ENCODE measurements at regions of chr1 and their contacts with region 1.

Region 1: DNA sequence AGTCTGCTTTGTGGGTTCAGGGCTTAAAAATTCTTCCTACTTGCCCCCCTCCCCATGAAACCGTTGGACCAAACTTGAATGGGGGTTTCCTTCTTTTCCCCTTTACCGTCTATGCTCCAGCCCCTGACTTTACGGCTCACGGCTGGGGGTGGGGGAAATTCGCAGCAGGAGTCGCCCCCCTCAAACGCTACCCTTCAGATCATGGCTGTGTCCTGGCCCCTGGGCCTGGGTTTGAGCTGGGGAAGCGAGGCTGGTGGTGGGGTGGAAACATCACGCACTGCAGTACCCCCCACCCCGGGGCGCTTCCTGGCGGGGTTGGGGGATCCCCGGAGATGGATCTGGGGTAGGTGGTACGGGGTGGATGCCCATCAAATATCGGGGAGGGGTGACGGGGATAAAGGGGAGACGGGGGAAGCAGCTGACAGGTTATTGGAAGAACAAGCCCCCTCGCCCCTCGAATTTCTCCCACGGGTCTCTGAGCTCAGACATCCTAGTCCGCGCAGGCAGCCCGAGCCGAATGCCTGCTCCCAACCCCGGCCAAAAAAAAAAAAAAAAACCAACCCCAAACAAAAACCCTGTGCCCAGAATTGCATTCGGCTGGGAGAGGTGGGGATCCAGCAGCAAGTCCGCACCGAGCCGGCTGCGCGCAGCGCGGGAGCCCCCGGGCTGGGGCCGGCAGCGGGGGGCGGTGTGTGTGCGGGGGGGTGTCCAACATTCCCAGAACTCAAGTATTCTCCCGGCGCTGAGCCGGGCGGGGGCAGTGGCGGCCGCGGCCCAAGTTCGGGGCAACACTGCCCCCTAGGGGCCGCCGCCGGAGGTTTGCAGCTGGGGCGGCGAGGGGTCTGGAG is 59.0 kb upstream of the ACOT11 start:
- DNase-seq: peak; percentile 65 to 84 (median 72)
- H3K4me3 ChIP-seq: peak overlapping the region; percentile 71 to 94
- H3K4me3 Mint-ChIP-seq: peak overlapping the region; percentile 88 to 96 (median 90)
- H3K27ac ChIP-seq: peak overlapping the region; percentile 72
- H3K27ac Mint-ChIP-seq: peak overlapping the region; percentile 82 to 95 (median 88)
- H3K4me1 ChIP-seq: peaks cover 39% of the 10 kb centered on the region
- H3K4me1 Mint-ChIP-seq: peaks cover 32 to 51% (median 43%) of the 10 kb centered on the region in 4 donors
- H3K27me3 ChIP-seq: no peaks in the 10 kb centered on the region
- H3K27me3 Mint-ChIP-seq: peaks cover 0 to 4% of the 10 kb centered on the region in 2 donors

Region 2: DNA sequence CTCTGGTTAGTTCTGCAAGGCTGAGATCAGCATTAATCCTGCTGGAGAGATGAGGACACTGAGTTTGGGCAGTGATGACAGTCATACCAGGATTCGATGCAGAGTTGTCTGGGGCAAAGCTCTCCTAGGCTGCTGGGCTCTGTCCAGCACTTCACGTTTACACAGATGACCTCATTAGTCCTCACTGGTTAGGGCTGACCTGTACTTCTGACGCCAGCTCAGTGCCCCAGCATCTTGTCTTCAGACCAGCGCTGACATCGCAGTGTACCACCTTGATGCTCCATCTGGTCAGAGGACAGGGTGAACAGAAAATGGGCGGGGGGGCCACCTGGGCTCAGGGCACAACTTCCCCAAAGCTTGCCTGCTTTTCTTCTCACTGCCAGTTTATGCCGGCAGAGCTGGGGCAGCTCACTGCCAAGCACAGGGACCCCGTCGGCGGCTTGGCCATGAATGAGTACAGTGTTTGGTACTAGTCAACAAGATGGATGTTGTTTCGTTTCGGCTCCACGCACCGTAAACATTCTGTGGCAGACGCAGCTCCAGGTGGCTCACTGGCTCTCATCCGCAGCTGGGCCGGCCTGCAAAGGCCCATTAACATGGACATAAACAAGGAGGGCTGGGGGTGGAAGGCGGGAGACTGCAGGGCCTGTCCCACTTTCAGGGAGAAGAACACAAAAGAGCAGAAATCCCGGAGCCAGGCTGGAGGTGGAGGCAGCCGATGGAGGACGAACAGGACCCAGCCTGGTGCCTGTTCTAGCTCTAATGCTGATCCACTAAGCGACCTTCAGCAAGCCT is 868.7 kb before region 1 on chr1:
- CTCF ChIA-PET with region 1: no interaction called
- POLR2A ChIA-PET with region 1: no interaction called
- intact Hi-C with region 1: no loop called
- DNase-seq: no peak
- H3K4me3 ChIP-seq: no peak overlapping the region
- H3K4me3 Mint-ChIP-seq: no peak overlapping the region
- H3K27ac ChIP-seq: no peak overlapping the region
- H3K27ac Mint-ChIP-seq: no peak overlapping the region
- H3K4me1 ChIP-seq: no peaks in the 10 kb centered on the region
- H3K4me1 Mint-ChIP-seq: no peaks in the 10 kb centered on the region
- H3K27me3 ChIP-seq: no peaks in the 10 kb centered on the region
- H3K27me3 Mint-ChIP-seq: peaks cover 0 to 1% of the 10 kb centered on the region in 2 donors

Region 3: GRCh38 chr1:53945433-53946251 is 543.4 kb before region 1 on chr1 and contains the start of gene IFT25:
- CTCF ChIA-PET with region 1: no interaction called
- POLR2A ChIA-PET with region 1: interaction called, 7 read pairs
- intact Hi-C with region 1: loop called (anchors 10 kb)
- DNase-seq: peak; percentile 97 to 100 (median 97)
- H3K4me3 ChIP-seq: peak within 1 kb of the TSS; percentile 63 to 87
- H3K4me3 Mint-ChIP-seq: peak within 1 kb of the TSS; percentile 93 to 99 (median 96)
- H3K27ac ChIP-seq: peak within 1 kb of the TSS; percentile 82
- H3K27ac Mint-ChIP-seq: peak within 1 kb of the TSS; percentile 85 to 98 (median 95)
- H3K4me1 ChIP-seq: peaks cover 44% of the 10 kb centered on the region
- H3K4me1 Mint-ChIP-seq: peaks cover 27 to 63% (median 46%) of the 10 kb centered on the region in 4 donors
- H3K27me3 ChIP-seq: no peaks in the 10 kb centered on the region
- H3K27me3 Mint-ChIP-seq: no peaks in the 10 kb centered on the region
- total RNA-seq, gene IFT25: 47.2 to 50.3 TPM

Region 4: GRCh38 chr1:54121482-54122134 is 367.4 kb before region 1 on chr1:
- CTCF ChIA-PET with region 1: interaction called, 43 read pairs
- POLR2A ChIA-PET with region 1: interaction called, 3 read pairs
- intact Hi-C with region 1: no loop called
- DNase-seq: peak in 4 of 5 donors; percentile 36 to 56 (median 45)
- H3K4me3 ChIP-seq: no peak overlapping the region
- H3K4me3 Mint-ChIP-seq: peak overlapping the region in 3 of 8 donors; percentile 31 to 49 (median 37)
- H3K27ac ChIP-seq: no peak overlapping the region
- H3K27ac Mint-ChIP-seq: peak overlapping the region in 1 of 7 donors; percentile 41
- H3K4me1 ChIP-seq: no peaks in the 10 kb centered on the region
- H3K4me1 Mint-ChIP-seq: peaks cover 0 to 11% (median 7%) of the 10 kb centered on the region in 4 donors
- H3K27me3 ChIP-seq: peaks cover 3% of the 10 kb centered on the region
- H3K27me3 Mint-ChIP-seq: no peaks in the 10 kb centered on the region

Region 5: GRCh38 chr1:54199765-54200518 is 289.1 kb before region 1 on chr1 and contains the starts of genes CYB5RL and MRPL37:
- CTCF ChIA-PET with region 1: interaction called, 3 read pairs
- POLR2A ChIA-PET with region 1: interaction called, 15 read pairs
- intact Hi-C with region 1: loop called (anchors 5 kb)
- DNase-seq: peak; percentile 90 to 95 (median 92)
- H3K4me3 ChIP-seq: peak within 1 kb of the TSS; percentile 76 to 83
- H3K4me3 Mint-ChIP-seq: peak within 1 kb of the TSS; percentile 89 to 95 (median 92)
- H3K27ac ChIP-seq: peak within 1 kb of the TSS; percentile 72
- H3K27ac Mint-ChIP-seq: peak within 1 kb of the TSS; percentile 83 to 95 (median 93)
- H3K4me1 ChIP-seq: peaks cover 29% of the 10 kb centered on the region
- H3K4me1 Mint-ChIP-seq: peaks cover 17 to 40% (median 30%) of the 10 kb centered on the region in 4 donors
- H3K27me3 ChIP-seq: no peaks in the 10 kb centered on the region
- H3K27me3 Mint-ChIP-seq: no peaks in the 10 kb centered on the region
- total RNA-seq, gene CYB5RL: 10.5 to 10.7 TPM
- total RNA-seq, gene MRPL37: 33.4 to 39.0 TPM

Region 6: GRCh38 chr1:54397090-54397591 is 91.9 kb before region 1 on chr1:
- CTCF ChIA-PET with region 1: interaction called, 36 read pairs
- POLR2A ChIA-PET with region 1: interaction called, 254 read pairs
- intact Hi-C with region 1: no loop called
- DNase-seq: no peak
- H3K4me3 ChIP-seq: no peak overlapping the region
- H3K4me3 Mint-ChIP-seq: no peak overlapping the region
- H3K27ac ChIP-seq: no peak overlapping the region
- H3K27ac Mint-ChIP-seq: peak overlapping the region in 3 of 7 donors; percentile 4 to 66 (median 13)
- H3K4me1 ChIP-seq: peaks cover 25% of the 10 kb centered on the region
- H3K4me1 Mint-ChIP-seq: peaks cover 34 to 73% (median 45%) of the 10 kb centered on the region in 4 donors
- H3K27me3 ChIP-seq: no peaks in the 10 kb centered on the region
- H3K27me3 Mint-ChIP-seq: no peaks in the 10 kb centered on the region

Region 7: DNA sequence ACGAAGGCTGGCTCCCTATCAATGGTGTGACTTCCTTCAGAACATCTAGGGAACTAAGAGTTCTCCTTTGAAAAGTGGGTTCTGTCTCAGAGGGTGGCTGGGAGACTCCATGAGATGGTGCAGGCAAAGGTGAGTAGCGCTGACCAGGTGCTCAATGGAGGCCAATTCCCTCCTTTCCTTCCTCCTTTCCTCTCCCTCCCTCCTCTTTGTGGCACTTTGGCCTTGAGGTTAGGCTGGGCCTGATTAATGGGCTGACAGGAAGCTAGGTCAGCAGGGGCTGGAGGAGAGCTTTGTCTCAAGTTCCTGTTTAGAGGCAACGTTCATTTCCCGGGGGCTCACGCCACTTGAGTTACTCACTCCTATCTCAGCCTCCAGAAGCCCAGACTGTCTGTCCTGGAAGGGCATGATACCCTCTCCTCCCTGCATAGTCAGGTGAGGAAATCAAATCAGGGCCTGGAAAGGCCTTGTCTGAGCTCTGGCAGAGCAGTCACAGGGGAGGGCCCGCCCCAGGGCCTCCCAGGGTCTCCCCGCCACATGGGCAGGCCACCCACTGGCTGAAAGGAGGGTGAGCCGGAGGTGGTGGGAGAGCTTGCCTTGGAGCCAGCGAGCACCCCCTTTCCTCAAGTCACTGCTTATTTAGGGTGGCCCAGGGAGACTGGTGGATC is 24.4 kb before region 1 on chr1:
- CTCF ChIA-PET with region 1: interaction called, 10 read pairs
- POLR2A ChIA-PET with region 1: interaction called, 37 read pairs
- intact Hi-C with region 1: loop called (anchors 1 kb)
- DNase-seq: no peak
- H3K4me3 ChIP-seq: no peak overlapping the region
- H3K4me3 Mint-ChIP-seq: no peak overlapping the region
- H3K27ac ChIP-seq: no peak overlapping the region
- H3K27ac Mint-ChIP-seq: peak overlapping the region in 2 of 7 donors; percentile 12 to 74
- H3K4me1 ChIP-seq: peaks cover 43% of the 10 kb centered on the region
- H3K4me1 Mint-ChIP-seq: peaks cover 24 to 50% (median 35%) of the 10 kb centered on the region in 4 donors
- H3K27me3 ChIP-seq: no peaks in the 10 kb centered on the region
- H3K27me3 Mint-ChIP-seq: no peaks in the 10 kb centered on the region

Measured in CD4-positive, alpha-beta memory T cell (primary cell).